CD14-positive monocyte (primary cell): ENCODE measurements at regions of chr2 and their contacts with region 1.

Region 1: DNA sequence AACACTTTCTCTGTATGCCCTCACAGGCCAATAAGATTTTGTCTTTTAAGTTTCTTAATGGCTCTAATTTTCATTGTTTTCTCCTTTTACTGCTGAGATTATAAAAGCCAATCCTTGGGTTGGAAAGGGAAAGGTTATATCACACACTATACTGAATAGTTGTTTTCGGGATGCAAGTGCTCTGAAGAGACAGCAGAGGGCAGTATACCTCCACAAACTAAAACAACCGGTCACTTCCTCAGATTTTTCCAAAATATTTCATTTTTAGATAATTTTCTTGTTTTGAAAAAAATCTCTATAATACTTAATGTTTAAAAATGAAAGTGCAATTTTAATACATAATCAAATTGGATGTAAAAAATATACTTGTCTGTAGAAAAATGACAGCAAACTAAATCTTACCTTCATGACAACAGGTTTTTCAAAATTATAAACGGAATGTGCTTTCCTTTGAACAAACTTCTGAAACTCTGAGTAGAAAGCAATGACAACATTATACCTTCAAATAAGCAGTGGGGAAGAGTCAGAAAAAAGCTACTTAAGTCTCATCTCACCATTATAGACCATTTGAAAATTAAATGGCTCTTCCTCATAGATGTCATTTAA is 82.7 kb downstream of the ORC4 start:
- DNase-seq: peak; percentile 9 to 32 (median 31)
- H3K4me3 ChIP-seq: no peak overlapping the region
- H3K4me3 Mint-ChIP-seq: no peak overlapping the region
- H3K27ac ChIP-seq: no peak overlapping the region
- H3K27ac Mint-ChIP-seq: no peak overlapping the region
- H3K4me1 ChIP-seq: no peaks in the 10 kb centered on the region
- H3K4me1 Mint-ChIP-seq: no peaks in the 10 kb centered on the region
- H3K27me3 ChIP-seq: no peaks in the 10 kb centered on the region
- H3K27me3 Mint-ChIP-seq: no peaks in the 10 kb centered on the region
- CTCF ChIP-seq: peak; percentile 96

Region 2: GRCh38 chr2:148519013-148519412 is 581.2 kb after region 1 on chr2:
- intact Hi-C with region 1: loop called in 1 of 2 experiments (anchors 10 kb)
- DNase-seq: no peak
- H3K4me3 ChIP-seq: no peak overlapping the region
- H3K4me3 Mint-ChIP-seq: no peak overlapping the region
- H3K27ac ChIP-seq: no peak overlapping the region
- H3K27ac Mint-ChIP-seq: no peak overlapping the region
- H3K4me1 ChIP-seq: no peaks in the 10 kb centered on the region
- H3K4me1 Mint-ChIP-seq: peaks cover 6% of the 10 kb centered on the region
- H3K27me3 ChIP-seq: no peaks in the 10 kb centered on the region
- H3K27me3 Mint-ChIP-seq: peaks cover 0 to 3% (median 0%) of the 10 kb centered on the region in 3 donors
- CTCF ChIP-seq: no peak

Region 3: DNA sequence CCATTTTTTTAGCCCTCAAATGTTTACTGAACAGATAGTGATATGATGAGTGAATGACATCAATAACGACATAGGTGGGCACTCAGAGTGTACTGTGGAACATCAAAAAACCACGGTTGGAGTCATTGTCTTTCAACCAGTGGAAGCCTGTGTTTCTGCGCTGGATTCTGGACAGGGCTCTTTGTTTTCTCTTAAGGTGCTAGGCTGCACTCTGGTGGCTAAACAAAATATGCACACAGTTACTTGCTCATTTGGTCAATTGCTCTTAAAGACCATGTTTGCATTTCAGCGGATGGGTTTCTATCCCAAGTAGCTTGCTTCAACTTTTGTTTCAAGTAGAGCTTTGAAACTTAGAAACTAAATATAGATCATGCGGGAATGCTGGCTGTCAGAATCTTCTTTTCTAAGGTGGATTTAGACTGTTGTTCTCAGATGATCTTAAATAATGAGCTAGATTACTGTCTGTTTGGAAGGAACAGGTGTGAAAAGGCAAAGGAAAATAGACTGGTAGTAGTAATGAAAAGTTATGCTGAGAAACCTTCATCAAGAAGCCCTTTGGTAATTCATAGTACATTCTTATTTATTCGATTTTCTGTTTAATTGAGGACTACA is 1052.1 kb after region 1 on chr2:
- intact Hi-C with region 1: loop called (anchors 2 to 10 kb)
- DNase-seq: peak; percentile 51 to 63 (median 60)
- H3K4me3 ChIP-seq: no peak overlapping the region
- H3K4me3 Mint-ChIP-seq: no peak overlapping the region
- H3K27ac ChIP-seq: no peak overlapping the region
- H3K27ac Mint-ChIP-seq: no peak overlapping the region
- H3K4me1 ChIP-seq: peaks cover 7 to 8% of the 10 kb centered on the region in 2 donors
- H3K4me1 Mint-ChIP-seq: peaks cover 15% of the 10 kb centered on the region
- H3K27me3 ChIP-seq: no peaks in the 10 kb centered on the region
- H3K27me3 Mint-ChIP-seq: peaks cover 0 to 2% (median 2%) of the 10 kb centered on the region in 3 donors
- CTCF ChIP-seq: peak; percentile 72